Adrenal gland (tissue), 19 donors: ENCODE measurements at regions of chr9 and their contacts with region 1.

Region 1: GRCh38 chr9:88041447-88041846 is 67.1 kb upstream of the CDK20 start:
- DNase-seq: no peak
- H3K4me3 ChIP-seq: no peak overlapping the region
- H3K27ac ChIP-seq: no peak overlapping the region
- H3K4me1 ChIP-seq: no peaks in the 10 kb centered on the region
- H3K27me3 ChIP-seq: no peaks in the 10 kb centered on the region
- CTCF ChIP-seq: peak in 5 of 6 experiments; percentile 41 to 59 (median 47)
- POLR2A ChIP-seq: no peak

Region 2: GRCh38 chr9:87684627-87685219 is 356.7 kb before region 1 on chr9:
- intact Hi-C with region 1: loop called in 1 of 2 experiments (anchors 10 kb)
- DNase-seq: peak in 6 of 7 donors; percentile 53 to 83 (median 64)
- H3K4me3 ChIP-seq: no peak overlapping the region
- H3K27ac ChIP-seq: peak overlapping the region in 2 of 5 donors; percentile 13 to 48
- H3K4me1 ChIP-seq: peaks cover 0 to 13% of the 10 kb centered on the region in 2 donors
- H3K27me3 ChIP-seq: no peaks in the 10 kb centered on the region
- CTCF ChIP-seq: peak; percentile 65 to 83 (median 73)
- POLR2A ChIP-seq: no peak

Region 3: GRCh38 chr9:87950765-87951488 is 90.5 kb before region 1 on chr9:
- intact Hi-C with region 1: loop called in 1 of 2 experiments (anchors 5 kb)
- DNase-seq: no peak
- H3K4me3 ChIP-seq: no peak overlapping the region
- H3K27ac ChIP-seq: no peak overlapping the region
- H3K4me1 ChIP-seq: no peaks in the 10 kb centered on the region
- H3K27me3 ChIP-seq: no peaks in the 10 kb centered on the region
- CTCF ChIP-seq: peak; percentile 36 to 77 (median 62)
- POLR2A ChIP-seq: no peak

Region 4: DNA sequence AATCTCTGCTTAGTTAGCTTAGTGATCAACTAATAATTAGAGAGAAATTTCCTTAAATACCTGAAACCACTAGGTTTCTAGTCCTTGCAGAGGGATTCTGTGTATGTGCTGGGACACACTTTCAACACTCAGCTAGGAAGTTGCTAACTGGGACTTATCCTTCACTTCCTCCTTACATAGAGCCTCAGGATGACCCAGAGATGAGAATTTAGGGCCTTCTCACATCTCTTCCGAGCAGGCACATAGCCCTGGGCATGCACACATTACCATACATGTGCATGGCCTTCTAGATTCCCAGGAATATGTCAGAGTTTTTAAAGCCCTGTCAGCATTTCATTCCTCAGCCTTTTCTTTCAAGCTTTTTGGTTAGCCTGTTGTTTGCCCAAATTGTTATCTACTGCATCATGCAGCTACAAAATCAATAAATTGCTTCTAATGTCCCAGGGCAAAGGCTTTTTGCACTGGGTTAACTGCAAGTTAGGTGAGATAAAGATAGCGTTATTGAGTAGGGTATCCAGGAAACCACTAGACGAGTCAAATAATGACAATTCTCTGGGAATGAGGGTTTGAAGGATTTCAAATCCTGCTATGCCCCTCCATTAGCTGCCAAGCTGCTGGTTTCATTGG is 45.1 kb before region 1 on chr9:
- intact Hi-C with region 1: no loop called
- DNase-seq: no peak
- H3K4me3 ChIP-seq: no peak overlapping the region
- H3K27ac ChIP-seq: no peak overlapping the region
- H3K4me1 ChIP-seq: no peaks in the 10 kb centered on the region
- H3K27me3 ChIP-seq: no peaks in the 10 kb centered on the region
- CTCF ChIP-seq: no peak
- POLR2A ChIP-seq: no peak

Region 5: GRCh38 chr9:88236531-88237478 is 195.4 kb after region 1 on chr9:
- intact Hi-C with region 1: no loop called
- DNase-seq: no peak
- H3K4me3 ChIP-seq: no peak overlapping the region
- H3K27ac ChIP-seq: no peak overlapping the region
- H3K4me1 ChIP-seq: no peaks in the 10 kb centered on the region
- H3K27me3 ChIP-seq: no peaks in the 10 kb centered on the region
- CTCF ChIP-seq: no peak
- POLR2A ChIP-seq: no peak

Region 6: DNA sequence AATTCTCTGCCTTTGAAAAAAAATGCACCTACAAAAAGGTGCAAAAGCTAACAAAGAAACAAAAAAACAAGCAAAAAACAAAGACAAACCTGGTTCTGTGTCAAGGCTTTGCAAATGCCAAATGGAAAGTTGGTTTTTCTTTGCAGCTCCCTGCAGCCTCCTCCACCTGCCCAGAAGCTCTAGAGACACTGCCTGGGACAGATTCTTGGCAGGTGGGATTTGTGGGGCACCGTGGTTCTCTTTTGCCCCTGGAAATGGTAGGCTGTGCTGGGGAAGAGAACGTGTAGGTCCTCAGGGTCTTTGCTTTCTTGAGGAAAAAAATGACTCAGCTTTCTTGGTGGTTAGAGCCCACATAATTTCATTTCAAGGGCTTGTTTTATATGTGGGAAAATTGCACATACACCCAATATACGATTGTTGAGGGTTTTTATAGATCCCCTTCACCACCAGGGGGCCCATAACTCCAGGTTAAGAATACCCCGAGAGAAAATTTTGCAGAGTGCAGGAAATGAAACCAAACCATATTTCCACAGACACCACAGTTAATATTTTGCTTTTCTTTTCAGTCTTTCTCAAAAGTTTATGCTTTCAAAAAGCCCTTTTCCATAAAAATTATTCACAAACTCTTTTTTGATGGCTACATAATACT is 552.2 kb after region 1 on chr9:
- intact Hi-C with region 1: no loop called
- DNase-seq: peak; percentile 66 to 85 (median 76)
- H3K4me3 ChIP-seq: no peak overlapping the region
- H3K27ac ChIP-seq: no peak overlapping the region
- H3K4me1 ChIP-seq: peaks cover 0 to 3% of the 10 kb centered on the region in 2 donors
- H3K27me3 ChIP-seq: no peaks in the 10 kb centered on the region
- CTCF ChIP-seq: peak; percentile 72 to 84 (median 79)
- POLR2A ChIP-seq: no peak